CD4-positive, alpha-beta T cell (primary cell): ENCODE measurements at regions of chr9 and their contacts with region 1.

Region 1: GRCh38 chr9:125913551-125913950 is 166.4 kb downstream of the PBX3 start:
- DNase-seq: no peak
- ATAC-seq: no peak
- H3K4me3 ChIP-seq: no peak overlapping the region
- H3K4me3 Mint-ChIP-seq: no peak overlapping the region
- H3K27ac ChIP-seq: no peak overlapping the region
- H3K27ac Mint-ChIP-seq: no peak overlapping the region
- H3K4me1 ChIP-seq: no peaks in the 10 kb centered on the region
- H3K4me1 Mint-ChIP-seq: no peaks in the 10 kb centered on the region
- H3K27me3 ChIP-seq: no peaks in the 10 kb centered on the region
- H3K27me3 Mint-ChIP-seq: no peaks in the 10 kb centered on the region
- CTCF ChIP-seq: no peak

Region 2: DNA sequence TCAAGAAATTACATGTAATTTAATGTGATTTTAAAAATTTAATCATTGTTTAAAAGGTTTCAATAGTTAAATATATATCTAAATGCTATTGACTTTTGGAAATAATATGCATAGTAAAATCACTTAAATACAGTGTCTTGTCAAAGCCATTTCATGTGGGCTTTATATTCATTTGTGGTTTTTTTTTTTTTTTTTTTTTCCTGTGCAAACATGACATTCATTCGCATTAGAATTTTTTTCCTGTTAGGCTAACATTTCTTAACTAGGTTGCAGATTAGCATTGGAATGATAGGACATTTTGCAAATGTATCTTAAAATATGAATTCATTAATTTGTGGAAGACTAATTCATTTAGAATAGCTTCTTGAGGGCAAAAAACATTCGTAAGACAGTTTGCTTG is 16.6 kb before region 1 on chr9:
- CTCF ChIA-PET with region 1: interaction called, 3 read pairs
- POLR2A ChIA-PET with region 1: no interaction called
- intact Hi-C with region 1: loop called in 1 of 2 experiments (anchors 1 kb)
- DNase-seq: no peak
- ATAC-seq: no peak
- H3K4me3 ChIP-seq: no peak overlapping the region
- H3K4me3 Mint-ChIP-seq: no peak overlapping the region
- H3K27ac ChIP-seq: no peak overlapping the region
- H3K27ac Mint-ChIP-seq: no peak overlapping the region
- H3K4me1 ChIP-seq: no peaks in the 10 kb centered on the region
- H3K4me1 Mint-ChIP-seq: peaks cover 12% of the 10 kb centered on the region
- H3K27me3 ChIP-seq: no peaks in the 10 kb centered on the region
- H3K27me3 Mint-ChIP-seq: peaks cover 5% of the 10 kb centered on the region
- CTCF ChIP-seq: no peak

Region 3: DNA sequence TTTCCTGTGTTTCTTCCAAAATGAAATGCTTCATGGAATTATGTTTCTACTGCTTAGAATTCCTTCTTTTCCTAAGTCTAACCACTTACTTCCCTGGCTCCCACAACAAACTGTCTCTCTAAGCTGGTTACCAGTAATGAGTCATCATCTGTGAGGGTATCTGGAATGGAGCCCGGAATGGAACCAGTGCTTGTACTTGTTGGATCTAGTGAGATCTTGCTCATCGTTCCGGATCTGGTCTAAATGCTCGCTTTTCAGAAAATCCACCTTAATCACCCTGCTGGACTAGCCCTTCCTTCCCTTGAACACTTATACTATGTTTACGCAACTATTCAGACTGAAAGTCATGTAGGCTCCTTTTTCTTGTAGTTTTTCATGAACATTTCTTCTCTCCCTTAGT is 18.5 kb after region 1 on chr9:
- CTCF ChIA-PET with region 1: no interaction called
- POLR2A ChIA-PET with region 1: no interaction called
- intact Hi-C with region 1: no loop called
- DNase-seq: no peak
- ATAC-seq: no peak
- H3K4me3 ChIP-seq: no peak overlapping the region
- H3K4me3 Mint-ChIP-seq: no peak overlapping the region
- H3K27ac ChIP-seq: no peak overlapping the region
- H3K27ac Mint-ChIP-seq: no peak overlapping the region
- H3K4me1 ChIP-seq: no peaks in the 10 kb centered on the region
- H3K4me1 Mint-ChIP-seq: no peaks in the 10 kb centered on the region
- H3K27me3 ChIP-seq: no peaks in the 10 kb centered on the region
- H3K27me3 Mint-ChIP-seq: no peaks in the 10 kb centered on the region
- CTCF ChIP-seq: no peak

Region 4: GRCh38 chr9:125942125-125942524 is 28.6 kb after region 1 on chr9:
- CTCF ChIA-PET with region 1: no interaction called
- POLR2A ChIA-PET with region 1: no interaction called
- intact Hi-C with region 1: no loop called
- DNase-seq: no peak
- ATAC-seq: no peak
- H3K4me3 ChIP-seq: no peak overlapping the region
- H3K4me3 Mint-ChIP-seq: no peak overlapping the region
- H3K27ac ChIP-seq: no peak overlapping the region
- H3K27ac Mint-ChIP-seq: no peak overlapping the region
- H3K4me1 ChIP-seq: no peaks in the 10 kb centered on the region
- H3K4me1 Mint-ChIP-seq: no peaks in the 10 kb centered on the region
- H3K27me3 ChIP-seq: no peaks in the 10 kb centered on the region
- H3K27me3 Mint-ChIP-seq: no peaks in the 10 kb centered on the region
- CTCF ChIP-seq: no peak

Region 5: GRCh38 chr9:125961072-125961471 is 47.5 kb after region 1 on chr9:
- CTCF ChIA-PET with region 1: no interaction called
- POLR2A ChIA-PET with region 1: no interaction called
- intact Hi-C with region 1: no loop called
- DNase-seq: peak in 1 of 14 experiments; percentile 6
- ATAC-seq: no peak
- H3K4me3 ChIP-seq: no peak overlapping the region
- H3K4me3 Mint-ChIP-seq: no peak overlapping the region
- H3K27ac ChIP-seq: no peak overlapping the region
- H3K27ac Mint-ChIP-seq: no peak overlapping the region
- H3K4me1 ChIP-seq: no peaks in the 10 kb centered on the region
- H3K4me1 Mint-ChIP-seq: no peaks in the 10 kb centered on the region
- H3K27me3 ChIP-seq: no peaks in the 10 kb centered on the region
- H3K27me3 Mint-ChIP-seq: no peaks in the 10 kb centered on the region
- CTCF ChIP-seq: no peak